HEK293 (cell line): ENCODE measurements at regions of chr4 and their contacts with region 1.

Region 1: GRCh38 chr4:150209140-150209829 is 131.0 kb downstream of the DCLK2 start:
- H3K4me3 ChIP-seq: no peak overlapping the region
- H3K27ac ChIP-seq: no peak overlapping the region
- H3K4me1 ChIP-seq: no peaks in the 10 kb centered on the region
- CTCF ChIP-seq: 0 out of 2 replicates have a peak, but pooled peaks have one; percentile 19

Region 2: DNA sequence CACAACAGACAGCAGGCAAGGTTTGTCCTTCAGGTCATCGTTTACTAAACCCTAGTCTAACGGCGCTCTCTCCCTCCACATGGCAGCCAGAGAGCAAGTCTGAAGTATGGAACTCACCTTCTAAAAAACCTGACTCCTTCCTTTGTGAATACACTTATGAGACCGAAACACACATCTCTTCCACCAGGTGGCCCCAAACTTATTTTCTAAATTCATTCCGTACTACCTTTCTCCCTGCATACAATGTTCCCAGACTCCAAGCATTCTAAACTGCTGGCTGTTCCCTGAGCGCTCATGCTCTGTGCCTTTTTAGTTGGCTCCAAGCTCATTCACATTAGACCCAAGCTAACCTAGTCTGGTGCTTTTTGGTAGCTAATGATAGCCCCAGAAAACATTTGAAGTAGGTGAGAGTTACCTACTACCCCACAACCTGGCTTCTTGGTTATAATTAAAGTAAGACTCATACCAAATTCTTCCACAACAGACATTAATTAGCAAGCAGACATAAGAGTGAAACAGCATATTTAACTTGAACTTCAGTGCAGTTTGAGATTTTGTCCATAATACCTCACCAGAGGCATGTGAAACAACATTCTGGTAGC is 198.7 kb before region 1 on chr4:
- CTCF ChIA-PET with region 1: interaction called, 18 read pairs
- POLR2A ChIA-PET with region 1: no interaction called
- H3K4me3 ChIP-seq: no peak overlapping the region
- H3K27ac ChIP-seq: no peak overlapping the region
- H3K4me1 ChIP-seq: peaks cover 7% of the 10 kb centered on the region; the same call in 1 of the 2 replicates
- CTCF ChIP-seq: peak; percentile 35; the same call in 1 of the 2 replicates

Region 3: GRCh38 chr4:150765216-150765615 is 555.9 kb after region 1 on chr4:
- CTCF ChIA-PET with region 1: no interaction called
- POLR2A ChIA-PET with region 1: no interaction called
- H3K4me3 ChIP-seq: no peak overlapping the region
- H3K27ac ChIP-seq: no peak overlapping the region
- H3K4me1 ChIP-seq: no peaks in the 10 kb centered on the region
- CTCF ChIP-seq: no peak